ENCODE measurements at regions of chr4 and their contacts with region 1.

Region 1: GRCh38 chr4:25180524-25181131 is 20.4 kb upstream of the SEPSECS start:
- DNase-seq: peak; percentile 33 to 70 (median 54)
- ATAC-seq: peak; percentile 96
- H3K4me3 ChIP-seq: no peak overlapping the region
- H3K27ac ChIP-seq: no peak overlapping the region
- H3K4me1 ChIP-seq: no peaks in the 10 kb centered on the region; a peak in 1 of 5 replicates
- H3K27me3 ChIP-seq: no peaks in the 10 kb centered on the region
- CTCF ChIP-seq: peak; percentile 65 to 76 (median 68)
- EP300 ChIP-seq: no peak
- POLR2A ChIP-seq: no peak
- RAD21 ChIP-seq: peak; percentile 54 to 65; a peak in 3 of 4 replicates

Region 2: GRCh38 chr4:25234390-25235370 is 54.1 kb after region 1 on chr4:
- CTCF ChIA-PET with region 1: no interaction called
- POLR2A ChIA-PET with region 1: no interaction called
- in situ Hi-C with region 1: no loop called
- intact Hi-C with region 1: loop called (anchors 5 kb)
- DNase-seq: peak; percentile 19 to 71 (median 44)
- ATAC-seq: peak; percentile 73
- H3K4me3 ChIP-seq: peak overlapping the region; percentile 93
- H3K27ac ChIP-seq: peak overlapping the region; percentile 92
- H3K4me1 ChIP-seq: peaks cover 12 to 14% of the 10 kb centered on the region in 2 experiments; a peak in 4 of 5 replicates
- H3K27me3 ChIP-seq: no peaks in the 10 kb centered on the region
- CTCF ChIP-seq: peak; percentile 38 to 53 (median 49); a peak in 3 of 6 replicates
- EP300 ChIP-seq: no peak
- POLR2A ChIP-seq: no peak
- RAD21 ChIP-seq: peak in 1 of 2 experiments; percentile 15; a peak in 1 of 4 replicates

Region 3: DNA sequence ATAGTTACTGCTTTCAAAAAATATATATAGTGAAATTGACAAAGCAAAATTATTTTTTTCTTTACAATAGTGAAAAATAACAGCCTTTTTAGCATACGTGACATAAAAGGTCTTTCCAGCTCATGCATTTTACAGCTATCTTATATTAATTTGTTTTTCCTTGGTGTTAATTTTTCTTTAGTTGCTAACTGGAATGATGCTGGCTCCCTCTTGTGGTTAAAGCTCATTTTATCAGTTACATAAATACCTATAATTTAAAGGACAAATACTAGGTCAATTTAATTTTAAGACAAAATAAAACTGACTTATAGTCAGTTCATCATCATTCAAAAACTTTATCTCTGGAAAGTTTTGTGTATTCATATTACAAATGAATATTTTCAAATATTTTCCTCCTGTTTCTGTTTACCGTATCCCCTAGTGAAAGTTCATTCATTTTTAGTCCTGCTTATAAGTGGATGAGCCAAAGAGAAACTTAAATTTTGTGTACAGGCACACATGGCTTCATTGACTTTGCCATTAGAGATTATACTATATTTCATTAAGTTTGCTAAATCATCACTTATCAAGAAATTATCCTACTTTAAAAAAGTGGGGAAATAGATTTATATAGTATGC is 186.5 kb after region 1 on chr4:
- CTCF ChIA-PET with region 1: interaction called, 5 read pairs
- POLR2A ChIA-PET with region 1: no interaction called
- in situ Hi-C with region 1: no loop called
- intact Hi-C with region 1: loop called (anchors 1 kb)
- DNase-seq: peak in 2 of 4 experiments; percentile 20 to 57
- ATAC-seq: no peak
- H3K4me3 ChIP-seq: no peak overlapping the region
- H3K27ac ChIP-seq: no peak overlapping the region
- H3K4me1 ChIP-seq: no peaks in the 10 kb centered on the region
- H3K27me3 ChIP-seq: no peaks in the 10 kb centered on the region
- CTCF ChIP-seq: peak in 2 of 3 experiments; percentile 41 to 75; a peak in 4 of 6 replicates
- EP300 ChIP-seq: no peak
- POLR2A ChIP-seq: no peak
- RAD21 ChIP-seq: peak; percentile 60 to 75